Prostate gland (tissue), 2 donors: ENCODE measurements at regions of chr19 and their contacts with region 1.

Region 1: DNA sequence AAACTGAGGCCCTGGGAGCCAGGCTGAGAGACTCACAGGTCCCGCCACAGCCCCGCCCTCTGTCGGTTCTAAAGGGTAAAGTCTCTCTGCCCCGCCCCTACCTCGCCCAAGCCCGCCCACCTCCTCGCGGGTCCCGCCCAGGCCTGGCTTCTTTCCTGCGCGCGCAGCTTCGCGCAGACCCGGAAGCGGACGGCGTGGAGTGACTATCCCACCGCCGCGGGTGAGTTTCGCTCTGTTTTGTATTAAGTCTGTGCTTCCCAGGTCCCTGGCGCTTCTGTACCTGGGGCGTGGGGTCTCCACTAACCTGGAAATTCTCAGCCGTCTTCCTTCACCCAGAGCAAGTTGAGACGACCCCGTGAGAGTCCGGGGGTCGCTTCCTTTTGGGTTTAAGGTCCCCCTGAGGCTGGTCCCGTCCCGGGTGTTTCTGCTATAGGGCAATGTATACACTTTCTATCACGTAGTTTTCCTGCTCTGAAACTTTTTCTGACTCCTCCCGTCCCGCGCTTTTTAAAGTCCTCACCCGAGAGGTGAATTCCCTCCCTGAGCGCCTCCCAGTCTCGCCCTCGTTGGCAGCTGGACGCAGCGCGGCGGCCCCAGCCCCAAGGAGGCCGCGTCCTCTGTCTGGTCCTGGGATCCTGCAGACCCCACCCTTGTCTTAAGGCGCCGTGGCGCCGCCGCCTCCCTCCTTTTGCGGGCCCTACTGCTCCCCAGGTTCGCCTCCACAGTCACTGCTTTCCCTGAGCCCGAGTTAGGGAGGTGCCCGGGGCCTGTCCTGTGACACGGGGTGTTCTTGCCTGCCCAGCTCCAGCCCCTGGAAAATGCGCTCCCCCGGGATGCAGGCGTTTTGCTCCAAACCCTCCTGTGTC is at the start of gene ZNF765:
- DNase-seq: peak; percentile 95
- H3K4me3 ChIP-seq: peak within 1 kb of the TSS; percentile 73 to 75
- H3K27ac ChIP-seq: peak within 1 kb of the TSS; percentile 79 to 80
- H3K4me1 ChIP-seq: no peaks in the 10 kb centered on the region
- H3K27me3 ChIP-seq: no peaks in the 10 kb centered on the region
- CTCF ChIP-seq: peak; percentile 33 to 78 (median 60)
- POLR2A ChIP-seq: peak; percentile 68
- total RNA-seq, gene ZNF765: 12.5 to 23.0 TPM

Region 2: DNA sequence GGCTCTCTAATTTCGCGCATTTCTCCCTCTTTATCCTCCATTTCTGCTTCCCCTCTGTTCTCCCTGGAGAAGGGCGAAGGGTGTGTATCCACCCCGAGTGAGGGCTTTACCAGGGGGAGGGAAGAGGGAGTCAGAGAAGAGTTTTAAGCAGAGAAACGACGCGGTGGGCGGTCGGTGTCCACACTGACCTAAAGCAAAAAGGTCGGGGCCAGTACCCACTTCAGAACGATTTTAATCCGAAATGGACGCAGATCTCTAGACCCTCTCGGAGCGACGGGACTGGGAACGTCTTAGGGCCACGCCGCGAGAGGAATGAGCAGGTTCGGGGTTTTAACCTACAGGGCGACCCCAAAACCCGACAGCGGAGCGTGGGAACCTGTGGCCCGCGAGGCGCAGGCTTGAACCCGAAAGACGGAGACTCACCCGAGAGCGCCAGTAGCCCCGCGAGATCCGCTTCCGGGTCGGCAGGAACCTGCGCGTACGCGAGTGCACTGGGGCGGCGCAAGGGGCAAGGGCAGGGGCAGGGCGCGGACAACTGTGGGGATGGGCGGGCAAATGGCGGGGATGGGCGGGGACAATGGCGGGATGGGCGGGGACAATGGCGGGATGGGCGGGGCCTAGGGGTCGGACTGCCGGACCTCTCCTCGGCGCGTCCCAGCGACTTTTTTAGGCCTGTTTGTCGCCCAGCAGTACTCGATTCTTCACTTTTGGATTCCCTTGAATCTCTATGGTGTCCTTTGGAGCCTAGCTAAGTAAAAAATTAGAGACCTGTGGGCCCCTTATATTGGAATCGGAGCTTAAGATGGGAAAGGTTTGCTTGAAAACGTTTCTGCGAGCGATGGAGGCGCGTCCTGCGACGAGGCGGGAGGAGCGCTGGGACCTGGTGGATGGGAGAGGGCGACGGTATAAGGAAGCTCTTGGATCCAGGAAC is 140.5 kb before region 1 on chr19 and contains the start of gene ZNF677:
- intact Hi-C with region 1: loop called (anchors 10 kb)
- DNase-seq: peak; percentile 85
- H3K4me3 ChIP-seq: peak within 1 kb of the TSS; percentile 65 to 76
- H3K27ac ChIP-seq: peak within 1 kb of the TSS; percentile 81
- H3K4me1 ChIP-seq: no peaks in the 10 kb centered on the region
- H3K27me3 ChIP-seq: no peaks in the 10 kb centered on the region
- CTCF ChIP-seq: no peak
- POLR2A ChIP-seq: peak; percentile 22
- total RNA-seq, gene ZNF677: 28.1 to 35.8 TPM

Region 3: GRCh38 chr19:53365134-53365898 is 29.9 kb before region 1 on chr19 and contains the start of gene ZNF525:
- intact Hi-C with region 1: loop called (anchors 2 kb)
- DNase-seq: peak; percentile 91
- H3K4me3 ChIP-seq: peak within 1 kb of the TSS; percentile 55 to 65
- H3K27ac ChIP-seq: peak within 1 kb of the TSS; percentile 73 to 88
- H3K4me1 ChIP-seq: peaks cover 4% of the 10 kb centered on the region
- H3K27me3 ChIP-seq: no peaks in the 10 kb centered on the region
- CTCF ChIP-seq: peak in 2 of 4 experiments; percentile 4 to 26
- POLR2A ChIP-seq: peak; percentile 68
- total RNA-seq, gene ZNF525: 7.8 to 20.4 TPM